GM23248 (cell line): ENCODE measurements at regions of chr13 and their contacts with region 1.

Region 1: GRCh38 chr13:80345771-80346510 is 5.0 kb upstream of the SPRY2 start:
- DNase-seq: no peak
- H3K4me3 ChIP-seq: no peak overlapping the region
- H3K27ac ChIP-seq: no peak overlapping the region
- H3K4me1 ChIP-seq: no peaks in the 10 kb centered on the region
- H3K27me3 ChIP-seq: no peaks in the 10 kb centered on the region

Region 2: GRCh38 chr13:79679334-79679733 is 666.6 kb before region 1 on chr13:
- in situ Hi-C with region 1: loop called (anchors 5 kb)
- DNase-seq: peak; percentile 81
- H3K4me3 ChIP-seq: no peak overlapping the region
- H3K27ac ChIP-seq: no peak overlapping the region
- H3K4me1 ChIP-seq: no peaks in the 10 kb centered on the region
- H3K27me3 ChIP-seq: no peaks in the 10 kb centered on the region

Region 3: DNA sequence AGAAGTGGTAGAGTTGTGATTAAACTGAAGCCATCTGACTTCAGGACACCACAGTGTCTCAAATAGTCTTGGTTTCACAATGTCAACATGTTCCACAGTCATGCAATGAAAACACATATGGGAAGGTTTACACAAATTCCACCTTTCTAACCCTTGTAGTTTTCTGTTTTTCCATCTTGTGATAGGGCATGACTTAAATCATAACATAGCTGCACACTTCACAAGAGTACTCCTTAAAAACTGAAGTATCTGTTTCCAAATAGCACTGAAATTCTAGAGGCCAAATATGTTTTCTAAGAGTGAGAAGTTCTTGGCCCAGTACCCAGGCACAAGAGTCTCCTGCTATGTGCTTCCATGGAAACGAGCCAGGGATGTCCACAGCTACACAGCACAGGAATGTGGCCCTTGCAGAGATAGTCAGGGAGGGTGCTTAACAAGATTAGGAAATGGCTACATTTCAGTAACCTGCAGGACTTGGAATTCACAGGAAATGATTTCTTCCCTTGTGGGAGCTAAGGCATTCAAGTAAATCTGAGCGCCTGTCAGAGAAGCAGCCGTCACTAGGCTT is 595.9 kb before region 1 on chr13:
- in situ Hi-C with region 1: no loop called
- DNase-seq: peak; percentile 94
- H3K4me3 ChIP-seq: peak overlapping the region; percentile 13; the same call in 1 of the 2 replicates
- H3K27ac ChIP-seq: peak overlapping the region; percentile 57
- H3K4me1 ChIP-seq: peaks cover 24% of the 10 kb centered on the region
- H3K27me3 ChIP-seq: no peaks in the 10 kb centered on the region